Natural killer cell (primary cell): ENCODE measurements at regions of chr11 and their contacts with region 1.

Region 1: GRCh38 chr11:19970944-19971343 is 189.3 kb downstream of the DBX1 start:
- DNase-seq: peak; percentile 36 to 42
- ATAC-seq: peak; percentile 77 to 90 (median 82)
- H3K4me3 ChIP-seq: no peak overlapping the region
- H3K4me3 Mint-ChIP-seq: peak overlapping the region; percentile 88
- H3K27ac ChIP-seq: no peak overlapping the region
- H3K27ac Mint-ChIP-seq: peak overlapping the region; percentile 81 to 84
- H3K4me1 ChIP-seq: peaks cover 32% of the 10 kb centered on the region
- H3K4me1 Mint-ChIP-seq: peaks cover 46 to 52% of the 10 kb centered on the region in 2 donors
- H3K27me3 ChIP-seq: peaks cover 21% of the 10 kb centered on the region
- H3K27me3 Mint-ChIP-seq: peaks cover 48 to 59% of the 10 kb centered on the region in 2 donors
- CTCF ChIP-seq: no peak

Region 2: GRCh38 chr11:20089796-20090653 is 119.1 kb after region 1 on chr11:
- intact Hi-C with region 1: loop called (anchors 5 kb)
- DNase-seq: no peak
- ATAC-seq: no peak
- H3K4me3 ChIP-seq: no peak overlapping the region
- H3K4me3 Mint-ChIP-seq: peak overlapping the region; percentile 22
- H3K27ac ChIP-seq: no peak overlapping the region
- H3K27ac Mint-ChIP-seq: no peak overlapping the region
- H3K4me1 ChIP-seq: peaks cover 11% of the 10 kb centered on the region
- H3K4me1 Mint-ChIP-seq: peaks cover 23% of the 10 kb centered on the region in 2 donors
- H3K27me3 ChIP-seq: peaks cover 4% of the 10 kb centered on the region
- H3K27me3 Mint-ChIP-seq: peaks cover 30 to 47% of the 10 kb centered on the region in 2 donors
- CTCF ChIP-seq: no peak